ENCODE measurements at regions of chr19 and their contacts with region 1.

Region 1: GRCh38 chr19:50777754-50778303 is 7.6 kb downstream of the GPR32 start:
- DNase-seq: no peak
- H3K4me3 ChIP-seq: no peak overlapping the region
- CTCF ChIP-seq: no peak
- POLR2A ChIP-seq: no peak

Region 2: DNA sequence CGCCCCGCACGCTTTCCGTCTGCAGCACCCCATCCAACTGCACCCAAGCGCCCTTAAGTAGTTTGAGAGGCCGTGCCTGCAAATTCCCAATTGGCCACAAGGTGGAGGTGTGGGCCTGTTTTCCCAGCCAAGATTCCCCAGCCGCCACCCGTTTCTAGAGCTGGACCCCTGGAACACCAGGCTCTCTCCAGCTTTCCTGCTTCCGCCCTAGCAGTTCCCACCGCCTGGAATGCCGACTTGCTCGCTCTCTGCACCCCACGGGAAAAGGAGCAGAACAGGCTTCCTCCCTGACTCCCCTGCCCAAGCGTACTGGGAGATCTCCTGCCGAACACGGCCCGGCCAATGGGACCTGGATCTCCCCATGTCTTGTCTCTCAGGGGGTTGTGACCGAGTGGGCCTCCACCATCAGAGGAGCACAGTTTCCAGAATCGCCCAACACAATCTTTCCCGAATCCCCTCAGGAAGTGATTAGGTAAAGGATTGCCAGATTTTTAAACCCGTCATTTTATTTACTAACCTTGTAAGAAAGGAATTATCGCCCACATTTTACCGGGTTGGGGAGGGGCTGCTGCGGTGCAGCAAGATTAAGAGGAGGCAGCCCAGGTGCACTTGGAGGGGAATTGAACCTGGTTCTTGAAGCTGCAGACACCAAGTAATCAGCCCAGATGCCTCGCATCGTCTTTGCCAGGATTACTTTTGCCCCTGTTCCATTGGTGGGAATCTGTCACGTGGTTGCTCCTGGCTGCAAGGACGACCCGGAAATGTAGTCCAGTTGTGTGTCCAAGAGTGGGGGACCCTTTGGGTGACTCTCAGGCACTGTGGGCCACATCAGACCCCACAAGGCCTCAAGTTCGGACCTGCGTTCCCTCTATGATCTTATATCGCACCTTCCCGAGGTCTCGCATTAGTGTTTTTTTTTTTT is 408.9 kb before region 1 on chr19:
- intact Hi-C with region 1: loop called (anchors 10 kb)
- DNase-seq: peak; percentile 88 to 97
- H3K4me3 ChIP-seq: peak overlapping the region; percentile 46
- CTCF ChIP-seq: peak in 1 of 3 donors; percentile 32
- POLR2A ChIP-seq: no peak

Region 3: GRCh38 chr19:50718255-50719118 is 59.3 kb before region 1 on chr19:
- intact Hi-C with region 1: loop called (anchors 10 kb)
- DNase-seq: no peak
- H3K4me3 ChIP-seq: no peak overlapping the region
- CTCF ChIP-seq: no peak
- POLR2A ChIP-seq: no peak

Region 4: GRCh38 chr19:52285466-52285865 is 1507.6 kb after region 1 on chr19:
- intact Hi-C with region 1: no loop called
- DNase-seq: no peak
- H3K4me3 ChIP-seq: no peak overlapping the region
- CTCF ChIP-seq: no peak
- POLR2A ChIP-seq: no peak

Measured in lower leg skin (tissue), 4 donors.